CD4-positive, alpha-beta T cell (primary cell): ENCODE measurements at regions of chr4 and their contacts with region 1.

Region 1: GRCh38 chr4:13627606-13628301 is at the start of gene BOD1L1:
- DNase-seq: peak; percentile 52 to 92 (median 73)
- ATAC-seq: peak; percentile 66
- H3K4me3 ChIP-seq: peak within 1 kb of the TSS; percentile 84
- H3K4me3 Mint-ChIP-seq: peak within 1 kb of the TSS; percentile 96
- H3K27ac ChIP-seq: peak within 1 kb of the TSS; percentile 81 to 88
- H3K27ac Mint-ChIP-seq: peak within 1 kb of the TSS; percentile 94
- H3K4me1 ChIP-seq: peaks cover 22% of the 10 kb centered on the region
- H3K4me1 Mint-ChIP-seq: peaks cover 57% of the 10 kb centered on the region
- H3K27me3 ChIP-seq: no peaks in the 10 kb centered on the region
- H3K27me3 Mint-ChIP-seq: no peaks in the 10 kb centered on the region
- CTCF ChIP-seq: peak; percentile 15
- total RNA-seq, gene BOD1L1: 39.3 to 39.6 TPM

Region 2: DNA sequence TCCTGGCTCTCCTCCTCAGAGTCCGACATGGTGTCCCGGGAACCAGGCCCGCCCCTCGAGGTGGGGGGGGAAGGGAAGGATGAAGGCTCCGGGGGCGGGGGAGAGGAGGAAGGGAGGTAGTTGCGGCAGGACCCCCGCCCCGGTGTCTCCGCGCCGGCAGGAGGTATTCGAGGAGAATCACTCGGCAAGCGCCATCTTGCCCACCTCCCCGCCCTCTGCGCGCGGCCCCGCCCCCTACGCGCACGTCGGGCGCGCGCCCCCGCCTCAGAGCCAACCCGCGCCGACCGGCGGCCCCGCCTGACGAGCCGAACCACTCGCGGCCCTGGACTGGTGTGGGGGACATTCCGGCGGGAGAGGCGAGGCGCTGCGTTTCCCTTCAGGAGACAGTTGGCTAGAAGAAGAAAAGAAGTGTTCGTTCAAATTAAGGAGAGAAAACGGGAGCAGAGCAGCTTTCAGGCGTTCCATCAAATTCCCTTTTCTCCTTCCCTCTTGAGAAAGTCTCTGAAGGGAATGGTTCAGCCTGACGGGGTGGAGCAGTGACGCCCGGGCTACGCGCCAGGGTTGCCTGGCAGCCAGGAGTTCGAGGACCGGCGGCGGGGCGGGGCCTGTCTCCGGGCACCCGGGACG is 143.5 kb before region 1 on chr4 and contains the start of gene RAB28:
- CTCF ChIA-PET with region 1: no interaction called
- POLR2A ChIA-PET with region 1: interaction called, 4 read pairs
- intact Hi-C with region 1: loop called in 1 of 2 experiments (anchors 2 kb)
- DNase-seq: peak; percentile 87 to 97 (median 92)
- ATAC-seq: peak; percentile 86
- H3K4me3 ChIP-seq: peak within 1 kb of the TSS; percentile 75
- H3K4me3 Mint-ChIP-seq: peak within 1 kb of the TSS; percentile 91
- H3K27ac ChIP-seq: peak within 1 kb of the TSS; percentile 89 to 98
- H3K27ac Mint-ChIP-seq: peak within 1 kb of the TSS; percentile 94
- H3K4me1 ChIP-seq: peaks cover 22% of the 10 kb centered on the region
- H3K4me1 Mint-ChIP-seq: peaks cover 23% of the 10 kb centered on the region
- H3K27me3 ChIP-seq: peaks cover 0 to 10% of the 10 kb centered on the region in 2 experiments
- H3K27me3 Mint-ChIP-seq: peaks cover 14% of the 10 kb centered on the region
- CTCF ChIP-seq: no peak
- total RNA-seq, gene RAB28: 3.9 to 4.2 TPM

Region 3: GRCh38 chr4:13821522-13821921 is 193.8 kb after region 1 on chr4:
- CTCF ChIA-PET with region 1: no interaction called
- POLR2A ChIA-PET with region 1: no interaction called
- intact Hi-C with region 1: no loop called
- DNase-seq: no peak
- ATAC-seq: no peak
- H3K4me3 ChIP-seq: no peak overlapping the region
- H3K4me3 Mint-ChIP-seq: no peak overlapping the region
- H3K27ac ChIP-seq: no peak overlapping the region
- H3K27ac Mint-ChIP-seq: no peak overlapping the region
- H3K4me1 ChIP-seq: no peaks in the 10 kb centered on the region
- H3K4me1 Mint-ChIP-seq: no peaks in the 10 kb centered on the region
- H3K27me3 ChIP-seq: no peaks in the 10 kb centered on the region
- H3K27me3 Mint-ChIP-seq: peaks cover 10% of the 10 kb centered on the region
- CTCF ChIP-seq: no peak